ENCODE measurements at regions of chr7 and their contacts with region 1.

Region 1: GRCh38 chr7:21427182-21427870 is 557 bp upstream of the SP4 start:
- DNase-seq: peak; percentile 97 to 99 (median 98)
- H3K4me3 ChIP-seq: peak overlapping the region; percentile 53 to 98 (median 91)
- H3K27ac ChIP-seq: peak overlapping the region; percentile 67 to 99 (median 97)
- H3K27me3 ChIP-seq: no peaks in the 10 kb centered on the region
- CTCF ChIP-seq: peak in 37 of 56 donors; percentile 3 to 55 (median 31)

Region 2: GRCh38 chr7:20786779-20787659 is 640.3 kb before region 1 on chr7 and contains the start of gene SP8:
- intact Hi-C with region 1: loop called in 1 of 2 experiments (anchors 10 kb)
- DNase-seq: peak in 1 of 10 donors; percentile 53
- H3K4me3 ChIP-seq: peak within 1 kb of the TSS in 57 of 59 donors; percentile 14 to 64 (median 42)
- H3K27ac ChIP-seq: no peak within 1 kb of the TSS
- H3K27me3 ChIP-seq: peaks cover 21 to 100% (median 99%) of the 10 kb centered on the region in 45 donors
- CTCF ChIP-seq: no peak
- total RNA-seq, gene SP8: 0.21 to 3.7 (median 1.2) TPM

Region 3: GRCh38 chr7:21261627-21262594 is 165.4 kb before region 1 on chr7:
- intact Hi-C with region 1: loop called in 1 of 2 experiments (anchors 5 kb)
- DNase-seq: peak in 3 of 10 donors; percentile 26 to 44 (median 42)
- H3K4me3 ChIP-seq: no peak overlapping the region
- H3K27ac ChIP-seq: no peak overlapping the region
- H3K27me3 ChIP-seq: peaks cover 0 to 33% (median 5%) of the 10 kb centered on the region in 45 donors
- CTCF ChIP-seq: peak in 51 of 56 donors; percentile 14 to 63 (median 47)

Region 4: GRCh38 chr7:21497072-21497471 is 69.7 kb after region 1 on chr7:
- intact Hi-C with region 1: loop called in 1 of 2 experiments (anchors 5 kb)
- DNase-seq: no peak
- H3K4me3 ChIP-seq: no peak overlapping the region
- H3K27ac ChIP-seq: no peak overlapping the region
- H3K27me3 ChIP-seq: no peaks in the 10 kb centered on the region
- CTCF ChIP-seq: peak in 4 of 56 donors; percentile 16 to 38 (median 27)

Region 5: DNA sequence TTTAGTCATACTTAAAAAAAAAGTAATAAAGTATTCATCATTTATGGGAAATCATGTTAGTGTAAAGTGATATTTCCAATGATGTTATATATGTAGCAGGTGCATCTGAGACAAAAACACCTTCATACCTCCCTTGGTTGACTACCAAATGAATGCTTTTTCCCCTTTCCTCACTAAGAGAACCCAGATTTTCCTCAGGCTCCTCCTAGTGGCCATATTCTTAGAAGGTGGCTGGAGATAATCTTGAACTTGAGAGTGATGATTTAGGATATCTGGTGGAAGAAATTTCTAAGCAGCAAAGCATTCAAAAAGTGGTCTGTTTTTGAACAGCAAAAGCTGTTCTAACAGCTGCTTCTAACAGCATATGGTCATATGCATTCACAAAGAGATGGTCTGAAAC is 98.7 kb after region 1 on chr7:
- intact Hi-C with region 1: no loop called
- DNase-seq: no peak
- H3K4me3 ChIP-seq: no peak overlapping the region
- H3K27ac ChIP-seq: no peak overlapping the region
- H3K27me3 ChIP-seq: no peaks in the 10 kb centered on the region
- CTCF ChIP-seq: peak in 28 of 56 donors; percentile 9 to 37 (median 22)

Measured in dorsolateral prefrontal cortex (tissue), 120 donors.